Activated naive CD4-positive, alpha-beta T cell treated with anti-CD3 and anti-CD28 coated beads for 36 hours (primary cell): ENCODE measurements at regions of chr1 and their contacts with region 1.

Region 1: GRCh38 chr1:116139592-116140134 is 28.5 kb downstream of the MAB21L3 start:
- DNase-seq: no peak
- H3K4me3 Mint-ChIP-seq: no peak overlapping the region
- H3K27ac Mint-ChIP-seq: no peak overlapping the region
- H3K4me1 Mint-ChIP-seq: peaks cover 7% of the 10 kb centered on the region
- H3K27me3 Mint-ChIP-seq: no peaks in the 10 kb centered on the region

Region 2: DNA sequence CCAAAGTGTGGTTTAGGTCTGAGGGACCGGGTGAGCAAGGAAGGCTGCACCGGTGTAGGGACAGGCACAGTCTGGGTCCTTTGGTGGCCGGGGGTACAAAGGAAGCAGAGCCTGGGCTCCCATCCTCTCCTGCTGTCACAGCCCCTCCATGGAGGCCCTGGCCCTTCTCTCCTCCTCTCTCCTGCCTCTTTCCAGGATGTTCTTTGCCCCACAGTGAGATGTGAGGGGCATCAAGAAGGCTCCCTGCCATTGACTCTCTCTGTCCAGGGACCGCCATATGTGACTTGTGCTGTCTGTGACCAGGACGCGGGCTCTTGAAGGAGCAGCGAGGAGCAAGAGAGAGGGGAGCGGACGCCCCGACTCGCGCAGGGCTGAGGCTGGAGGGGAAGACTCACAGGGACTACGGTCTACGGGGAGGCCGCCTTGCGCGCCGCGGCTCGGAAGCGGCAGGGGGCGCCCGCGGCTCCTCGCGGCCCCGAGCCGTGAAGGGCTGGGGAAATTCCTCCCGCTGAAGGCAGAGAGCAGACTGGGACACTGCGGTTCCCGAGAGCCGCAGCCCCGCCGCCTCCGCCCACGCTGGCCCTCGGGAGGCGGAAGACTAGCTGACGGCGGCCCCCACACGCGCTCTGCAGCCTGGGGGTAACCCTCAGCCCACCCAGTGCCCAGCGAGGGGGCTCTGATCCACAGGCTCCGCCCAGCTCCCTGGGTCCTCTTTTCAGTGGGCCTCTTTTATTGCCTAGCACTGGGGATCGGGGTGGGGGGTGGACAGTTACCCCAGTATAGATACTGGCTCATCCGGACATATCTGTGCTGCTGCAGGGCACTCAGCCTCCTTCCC is 12.3 kb after region 1 on chr1:
- CTCF ChIA-PET with region 1: interaction called, 57 read pairs
- intact Hi-C with region 1: loop called (anchors 1 kb)
- DNase-seq: peak; percentile 86
- H3K4me3 Mint-ChIP-seq: peak overlapping the region; percentile 60
- H3K27ac Mint-ChIP-seq: peak overlapping the region; percentile 14
- H3K4me1 Mint-ChIP-seq: peaks cover 18% of the 10 kb centered on the region
- H3K27me3 Mint-ChIP-seq: no peaks in the 10 kb centered on the region

Region 3: GRCh38 chr1:116182019-116182714 is 42.5 kb after region 1 on chr1:
- CTCF ChIA-PET with region 1: interaction called, 10 read pairs
- intact Hi-C with region 1: no loop called
- DNase-seq: no peak
- H3K4me3 Mint-ChIP-seq: no peak overlapping the region
- H3K27ac Mint-ChIP-seq: no peak overlapping the region
- H3K4me1 Mint-ChIP-seq: no peaks in the 10 kb centered on the region
- H3K27me3 Mint-ChIP-seq: peaks cover 2% of the 10 kb centered on the region

Region 4: DNA sequence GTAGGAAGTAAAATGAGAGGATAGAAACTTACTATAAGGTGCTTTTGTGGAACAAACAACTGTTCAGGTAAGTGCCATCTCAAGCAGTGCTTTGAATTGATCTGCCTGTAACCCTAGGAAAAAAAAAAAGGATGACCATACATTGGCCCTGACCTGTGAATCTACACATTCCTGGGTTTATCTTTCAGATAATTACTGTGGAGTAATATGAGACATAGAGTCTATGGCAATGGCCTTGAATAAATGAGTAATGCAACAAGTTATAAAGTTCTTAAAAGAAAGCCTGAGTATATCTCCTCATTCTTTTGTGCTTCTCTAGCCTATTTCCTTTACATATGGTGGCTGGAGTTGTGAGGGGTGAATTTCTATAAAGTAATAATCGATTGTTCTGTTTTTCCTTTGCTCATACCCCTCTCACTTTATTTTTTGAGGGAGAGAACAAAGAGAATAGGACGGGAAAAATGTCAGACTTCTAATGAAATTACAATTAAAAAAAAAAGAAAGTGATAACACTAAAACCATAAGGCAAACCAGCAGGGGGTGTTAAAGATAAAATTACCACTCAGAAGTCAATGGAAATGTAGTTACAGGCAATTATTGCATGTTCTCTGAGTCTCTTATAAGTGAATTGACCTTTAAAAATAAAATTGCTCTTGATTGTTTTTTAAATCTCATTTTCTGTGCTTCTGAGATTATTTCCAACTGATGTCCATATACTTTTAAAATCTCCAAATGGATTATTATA is 220.9 kb after region 1 on chr1:
- CTCF ChIA-PET with region 1: interaction called, 5 read pairs
- intact Hi-C with region 1: loop called (anchors 1 kb)
- DNase-seq: no peak
- H3K4me3 Mint-ChIP-seq: no peak overlapping the region
- H3K27ac Mint-ChIP-seq: no peak overlapping the region
- H3K4me1 Mint-ChIP-seq: peaks cover 25% of the 10 kb centered on the region
- H3K27me3 Mint-ChIP-seq: no peaks in the 10 kb centered on the region

Region 5: GRCh38 chr1:116498789-116499628 is 359.3 kb after region 1 on chr1:
- CTCF ChIA-PET with region 1: interaction called, 79 read pairs
- intact Hi-C with region 1: loop called (anchors 1 kb)
- DNase-seq: peak; percentile 70
- H3K4me3 Mint-ChIP-seq: no peak overlapping the region
- H3K27ac Mint-ChIP-seq: no peak overlapping the region
- H3K4me1 Mint-ChIP-seq: peaks cover 17% of the 10 kb centered on the region
- H3K27me3 Mint-ChIP-seq: no peaks in the 10 kb centered on the region